ENCODE measurements at regions of chr5 and their contacts with region 1.

Region 1: DNA sequence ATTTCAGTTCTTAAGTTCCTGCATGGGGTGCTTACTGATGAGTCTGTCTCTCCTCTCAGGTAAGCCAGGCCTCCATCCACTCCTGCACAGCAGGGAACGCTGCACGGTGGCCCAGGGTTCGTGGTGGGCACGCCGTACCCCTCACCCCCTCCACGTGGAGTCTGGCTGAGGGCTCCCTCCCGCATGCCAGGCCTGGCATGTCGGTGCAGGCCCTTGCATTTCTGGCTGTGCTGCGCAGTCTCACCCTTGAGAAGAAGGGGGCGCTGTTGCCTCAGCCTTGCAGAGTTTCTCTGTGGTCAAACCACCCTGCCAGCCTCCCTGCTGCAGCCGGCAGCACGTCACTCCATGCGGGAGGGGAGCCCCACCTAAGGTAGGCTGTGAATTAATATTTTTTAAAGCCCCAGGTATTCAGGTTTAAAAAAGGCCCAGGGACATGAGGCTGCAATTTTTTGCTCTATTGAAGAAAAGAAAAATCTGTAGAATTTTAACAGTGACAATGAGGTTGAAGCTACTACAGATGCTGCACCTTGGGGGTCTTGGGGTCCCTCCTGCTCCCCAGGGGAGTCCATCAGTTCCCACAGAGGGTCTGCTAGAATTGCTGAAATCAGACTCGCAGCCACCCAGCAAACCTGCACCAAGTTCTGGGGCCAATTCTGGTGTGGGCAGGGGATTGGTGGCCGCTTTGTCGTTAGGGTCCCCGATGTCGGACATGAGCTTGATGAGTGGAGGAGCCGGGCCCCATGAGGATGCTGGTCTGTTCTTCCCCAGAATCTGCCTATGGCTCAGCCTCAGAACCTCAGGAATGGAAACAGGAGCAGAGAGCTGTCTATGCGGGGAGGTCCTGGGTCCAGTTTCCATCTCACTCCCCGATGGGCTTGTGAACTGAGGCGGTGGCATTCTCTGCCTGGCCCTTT is 52.6 kb downstream of the TENT4A start:
- DNase-seq: peak; percentile 63
- ATAC-seq: peak; percentile 91
- H3K4me3 ChIP-seq: no peak overlapping the region
- H3K27ac ChIP-seq: no peak overlapping the region
- H3K4me1 ChIP-seq: no peaks in the 10 kb centered on the region
- H3K27me3 ChIP-seq: no peaks in the 10 kb centered on the region
- CTCF ChIP-seq: peak; percentile 83
- POLR2A ChIP-seq: no peak
- RAD21 ChIP-seq: peak; percentile 85

Region 2: DNA sequence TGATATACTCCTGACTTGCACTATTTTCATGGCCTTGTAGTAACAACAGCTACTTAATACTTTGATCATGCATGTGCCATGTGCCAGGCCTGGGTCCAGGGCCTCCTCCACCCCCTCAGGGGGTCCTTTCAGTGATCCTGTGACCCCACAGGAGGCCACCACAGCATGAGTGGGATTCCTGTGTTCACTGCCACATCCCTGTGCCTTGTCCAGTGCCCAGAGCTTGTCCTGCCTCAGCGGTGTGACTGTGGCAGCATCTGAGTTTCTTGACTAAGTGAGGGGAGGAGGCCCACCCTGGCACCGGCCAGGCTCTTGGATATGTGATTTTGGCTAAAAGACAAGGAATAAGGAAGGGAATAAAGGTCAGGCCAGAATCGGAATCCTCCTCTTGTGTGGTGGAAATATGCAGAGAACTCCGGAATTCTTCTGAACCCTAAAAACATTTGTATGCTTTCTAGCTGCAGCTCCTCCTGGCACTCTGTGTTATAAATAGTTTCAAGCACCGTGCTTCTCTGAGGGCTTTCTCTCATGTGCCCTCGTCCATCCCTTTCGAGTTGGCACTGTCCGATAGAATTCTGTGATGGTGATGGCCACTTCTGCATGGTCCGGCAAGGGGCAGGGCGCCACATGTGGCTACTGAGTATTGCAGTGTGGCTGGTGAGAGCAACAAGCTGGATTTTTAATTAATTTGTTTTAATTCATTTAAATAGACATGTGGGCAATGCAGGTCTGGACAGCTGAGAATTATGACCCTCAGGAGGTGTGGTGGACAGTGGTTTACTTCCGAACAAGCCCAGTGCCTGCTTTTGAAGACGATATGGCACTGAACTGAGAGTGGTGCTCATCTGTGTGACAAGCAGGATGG is 20.8 kb before region 1 on chr5:
- CTCF ChIA-PET with region 1: no interaction called
- POLR2A ChIA-PET with region 1: no interaction called
- dilution Hi-C with region 1: no loop called
- in situ Hi-C with region 1: no loop called
- intact Hi-C with region 1: no loop called
- DNase-seq: no peak
- ATAC-seq: no peak
- H3K4me3 ChIP-seq: no peak overlapping the region
- H3K27ac ChIP-seq: no peak overlapping the region
- H3K4me1 ChIP-seq: peaks cover 2% of the 10 kb centered on the region
- H3K27me3 ChIP-seq: no peaks in the 10 kb centered on the region
- CTCF ChIP-seq: no peak
- POLR2A ChIP-seq: no peak
- RAD21 ChIP-seq: no peak

Region 3: GRCh38 chr5:6837519-6838110 is 71.7 kb after region 1 on chr5:
- CTCF ChIA-PET with region 1: no interaction called
- POLR2A ChIA-PET with region 1: no interaction called
- dilution Hi-C with region 1: no loop called
- in situ Hi-C with region 1: no loop called
- intact Hi-C with region 1: loop called (anchors 1 kb)
- DNase-seq: no peak
- ATAC-seq: no peak; the same call in 1 of the 2 replicates
- H3K4me3 ChIP-seq: no peak overlapping the region
- H3K27ac ChIP-seq: no peak overlapping the region
- H3K4me1 ChIP-seq: no peaks in the 10 kb centered on the region
- H3K27me3 ChIP-seq: no peaks in the 10 kb centered on the region
- CTCF ChIP-seq: peak; percentile 59
- POLR2A ChIP-seq: no peak
- RAD21 ChIP-seq: peak; percentile 55

Region 4: GRCh38 chr5:7745882-7746610 is 980.2 kb after region 1 on chr5:
- CTCF ChIA-PET with region 1: interaction called, 3 read pairs
- POLR2A ChIA-PET with region 1: no interaction called
- dilution Hi-C with region 1: no loop called
- in situ Hi-C with region 1: loop called (anchors 5 kb)
- intact Hi-C with region 1: loop called (anchors 1 kb)
- DNase-seq: peak; percentile 59
- ATAC-seq: peak; percentile 67
- H3K4me3 ChIP-seq: no peak overlapping the region
- H3K27ac ChIP-seq: no peak overlapping the region
- H3K4me1 ChIP-seq: no peaks in the 10 kb centered on the region
- H3K27me3 ChIP-seq: no peaks in the 10 kb centered on the region
- CTCF ChIP-seq: peak; percentile 75
- POLR2A ChIP-seq: no peak
- RAD21 ChIP-seq: peak; percentile 54

Region 5: GRCh38 chr5:7815892-7816534 is 1050.1 kb after region 1 on chr5:
- CTCF ChIA-PET with region 1: no interaction called
- POLR2A ChIA-PET with region 1: no interaction called
- dilution Hi-C with region 1: no loop called
- in situ Hi-C with region 1: no loop called
- intact Hi-C with region 1: loop called (anchors 5 kb)
- DNase-seq: peak; percentile 39
- ATAC-seq: peak; percentile 98
- H3K4me3 ChIP-seq: no peak overlapping the region
- H3K27ac ChIP-seq: no peak overlapping the region
- H3K4me1 ChIP-seq: no peaks in the 10 kb centered on the region
- H3K27me3 ChIP-seq: no peaks in the 10 kb centered on the region
- CTCF ChIP-seq: peak; percentile 64
- POLR2A ChIP-seq: no peak
- RAD21 ChIP-seq: peak; percentile 57

Measured in IMR-90 (cell line).